AG04450 (cell line): ENCODE measurements at regions of chr6 and their contacts with region 1.

Region 1: DNA sequence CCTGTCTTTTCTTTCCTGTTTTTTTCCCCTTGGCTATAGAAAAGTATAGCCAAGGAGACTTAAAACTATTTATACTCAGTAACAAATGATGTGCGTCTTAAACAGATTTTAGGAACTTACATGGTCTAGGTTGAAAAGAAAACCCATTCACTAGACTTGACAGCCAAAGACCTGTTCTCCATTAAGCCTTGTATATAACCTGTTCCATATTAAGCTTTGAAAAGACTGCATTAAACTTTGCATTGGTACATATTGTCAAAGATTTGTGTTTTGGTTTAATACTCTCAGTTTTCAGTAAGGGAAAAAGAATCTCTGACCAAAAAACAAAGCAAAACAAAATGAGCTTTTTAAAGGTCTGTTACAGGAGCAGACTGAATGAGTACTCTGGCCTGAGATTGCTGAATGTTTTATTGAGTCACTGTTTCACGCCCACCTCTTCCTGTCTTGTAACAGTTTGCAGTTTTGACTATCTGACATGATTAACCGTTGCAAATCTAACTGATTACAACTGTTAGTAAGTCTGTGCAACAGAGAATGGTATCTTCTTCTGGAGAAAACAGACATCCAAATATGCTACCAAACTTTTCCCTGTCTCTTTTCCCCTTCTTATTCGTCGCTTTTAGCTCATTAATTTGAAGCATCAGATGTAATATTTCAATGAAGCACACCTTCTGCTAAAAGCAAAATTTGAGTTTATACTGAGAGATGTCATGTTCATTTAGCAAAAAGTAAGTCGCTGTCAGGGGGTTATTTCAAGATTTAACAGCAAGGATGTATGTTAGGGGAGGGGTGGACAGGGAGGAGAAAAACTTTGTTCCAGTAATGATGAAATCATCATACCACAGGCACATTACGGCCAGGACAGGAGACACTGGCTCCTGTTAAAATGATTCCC is 59.1 kb upstream of the SUPT3H start:
- DNase-seq: no peak
- H3K4me3 ChIP-seq: no peak overlapping the region
- H3K27ac ChIP-seq: no peak overlapping the region
- H3K27me3 ChIP-seq: no peaks in the 10 kb centered on the region
- CTCF ChIP-seq: no peak

Region 2: DNA sequence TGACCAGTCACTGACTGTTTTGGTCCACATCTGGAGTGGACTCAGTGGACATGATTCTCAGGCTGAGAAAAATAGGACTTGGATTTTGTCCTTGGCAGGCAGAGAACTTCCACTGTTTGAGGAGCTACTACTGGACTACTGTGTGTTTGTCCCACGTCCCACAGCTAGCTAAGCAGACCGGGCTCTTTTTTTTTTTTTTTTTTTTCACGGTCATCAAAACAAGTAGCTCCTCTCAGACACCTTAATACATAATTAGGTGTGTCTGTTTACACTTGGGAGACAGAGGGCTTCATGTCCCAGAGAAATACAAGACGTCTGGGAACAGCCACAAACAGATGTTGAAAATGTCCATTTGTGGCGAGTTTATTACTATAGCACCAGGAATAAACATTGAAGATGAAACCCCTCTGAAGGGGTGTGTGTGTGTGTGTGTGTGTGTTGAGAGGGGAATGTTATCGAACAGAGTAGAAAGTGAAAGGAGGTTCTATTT is 96.0 kb after region 1 on chr6:
- CTCF ChIA-PET with region 1: no interaction called
- POLR2A ChIA-PET with region 1: interaction called, 12 read pairs
- DNase-seq: no peak
- H3K4me3 ChIP-seq: peak overlapping the region; percentile 46
- H3K27ac ChIP-seq: peak overlapping the region; percentile 47
- H3K27me3 ChIP-seq: no peaks in the 10 kb centered on the region
- CTCF ChIP-seq: no peak

Region 3: DNA sequence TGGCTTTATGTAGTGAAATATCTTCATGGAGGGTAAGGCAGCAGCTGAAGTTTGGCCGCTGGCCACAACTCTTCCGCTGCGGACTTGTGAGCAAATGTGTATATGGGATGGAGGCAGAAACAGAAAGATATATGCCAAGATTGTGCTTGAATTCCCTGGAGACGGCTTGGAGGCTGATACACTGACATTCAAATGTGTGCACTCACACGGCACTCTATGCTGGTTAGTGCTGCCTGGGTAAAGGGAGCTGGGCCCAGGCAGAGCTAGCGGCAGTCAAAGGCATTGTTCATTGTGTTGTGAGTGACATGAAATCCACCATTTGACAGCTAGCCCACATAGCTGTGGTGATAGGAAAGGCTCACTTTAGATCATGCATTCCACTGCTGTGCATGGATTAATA is 376.1 kb after region 1 on chr6:
- CTCF ChIA-PET with region 1: no interaction called
- POLR2A ChIA-PET with region 1: no interaction called
- DNase-seq: no peak
- H3K4me3 ChIP-seq: no peak overlapping the region
- H3K27ac ChIP-seq: no peak overlapping the region
- H3K27me3 ChIP-seq: peaks cover 6% of the 10 kb centered on the region
- CTCF ChIP-seq: no peak